ENCODE measurements at regions of chr6 and their contacts with region 1.

Region 1: GRCh38 chr6:73560182-73560732 is 39.4 kb upstream of the EEF1A1 start:
- DNase-seq: peak; percentile 21
- H3K4me3 Mint-ChIP-seq: no peak overlapping the region
- H3K27ac Mint-ChIP-seq: no peak overlapping the region
- H3K4me1 Mint-ChIP-seq: peaks cover 27% of the 10 kb centered on the region
- H3K27me3 Mint-ChIP-seq: no peaks in the 10 kb centered on the region

Region 2: GRCh38 chr6:73515204-73515655 is 45.0 kb before region 1 on chr6:
- CTCF ChIA-PET with region 1: no interaction called
- intact Hi-C with region 1: loop called (anchors 1 kb)
- DNase-seq: no peak
- H3K4me3 Mint-ChIP-seq: peak overlapping the region; percentile 4
- H3K27ac Mint-ChIP-seq: peak overlapping the region; percentile 83
- H3K4me1 Mint-ChIP-seq: peaks cover 24% of the 10 kb centered on the region
- H3K27me3 Mint-ChIP-seq: peaks cover 4% of the 10 kb centered on the region

Region 3: DNA sequence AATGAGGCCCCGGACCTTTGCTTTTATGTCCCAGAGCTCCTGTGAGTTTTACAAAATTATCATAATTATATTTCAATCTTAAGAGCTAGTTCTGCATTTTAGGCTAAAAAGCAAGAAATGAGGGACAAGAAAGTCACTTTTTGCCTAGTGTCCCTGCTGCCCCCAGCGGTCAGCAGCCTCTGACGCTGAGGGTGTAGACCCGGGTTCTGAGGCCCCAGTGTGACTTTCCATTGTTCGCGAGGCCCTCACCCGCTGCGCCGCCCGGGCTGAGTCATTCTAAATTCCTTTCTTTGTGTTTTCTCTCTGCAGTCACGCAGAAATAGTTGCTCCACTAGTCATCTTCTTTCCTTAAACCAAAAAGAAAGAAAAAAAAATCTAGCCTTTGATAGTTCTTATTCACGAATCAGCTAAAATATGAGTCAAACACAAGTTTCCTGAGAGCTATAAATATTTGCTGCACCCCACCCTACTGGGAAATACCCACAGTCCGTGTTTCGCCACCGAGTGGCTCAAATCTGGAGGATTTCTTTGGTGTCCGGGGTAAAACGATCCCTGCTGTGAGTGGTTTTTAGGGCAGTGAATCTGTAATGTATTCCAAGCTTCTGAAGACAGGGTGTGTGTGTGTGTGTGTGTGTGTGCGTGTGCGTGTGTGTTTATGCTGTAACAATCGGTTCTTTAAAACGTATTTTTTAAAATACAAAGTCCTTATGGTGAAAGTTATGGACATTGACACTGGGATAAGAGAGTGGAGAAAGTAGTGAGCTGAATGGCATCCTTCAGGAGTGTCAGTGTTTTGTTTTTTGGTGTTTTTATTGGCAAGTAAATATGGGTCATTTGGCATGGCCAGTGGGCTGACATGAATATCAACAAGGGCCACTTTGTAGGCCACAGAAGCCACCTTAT is 20.2 kb after region 1 on chr6:
- CTCF ChIA-PET with region 1: interaction called, 3 read pairs
- intact Hi-C with region 1: loop called (anchors 1 kb)
- DNase-seq: peak; percentile 90
- H3K4me3 Mint-ChIP-seq: peak overlapping the region; percentile 76
- H3K27ac Mint-ChIP-seq: peak overlapping the region; percentile 99
- H3K4me1 Mint-ChIP-seq: peaks cover 28% of the 10 kb centered on the region
- H3K27me3 Mint-ChIP-seq: no peaks in the 10 kb centered on the region

Region 4: GRCh38 chr6:73585566-73586415 is 25.5 kb after region 1 on chr6:
- CTCF ChIA-PET with region 1: interaction called, 3 read pairs
- intact Hi-C with region 1: loop called (anchors 1 kb)
- DNase-seq: peak; percentile 70
- H3K4me3 Mint-ChIP-seq: peak overlapping the region; percentile 78
- H3K27ac Mint-ChIP-seq: peak overlapping the region; percentile 99
- H3K4me1 Mint-ChIP-seq: peaks cover 36% of the 10 kb centered on the region
- H3K27me3 Mint-ChIP-seq: no peaks in the 10 kb centered on the region

Region 5: GRCh38 chr6:74000666-74001490 is 440.6 kb after region 1 on chr6:
- CTCF ChIA-PET with region 1: no interaction called
- intact Hi-C with region 1: no loop called
- DNase-seq: no peak
- H3K4me3 Mint-ChIP-seq: no peak overlapping the region
- H3K27ac Mint-ChIP-seq: no peak overlapping the region
- H3K4me1 Mint-ChIP-seq: no peaks in the 10 kb centered on the region
- H3K27me3 Mint-ChIP-seq: no peaks in the 10 kb centered on the region